MCF 10A (cell line): ENCODE measurements at regions of chr15 and their contacts with region 1.

Region 1: DNA sequence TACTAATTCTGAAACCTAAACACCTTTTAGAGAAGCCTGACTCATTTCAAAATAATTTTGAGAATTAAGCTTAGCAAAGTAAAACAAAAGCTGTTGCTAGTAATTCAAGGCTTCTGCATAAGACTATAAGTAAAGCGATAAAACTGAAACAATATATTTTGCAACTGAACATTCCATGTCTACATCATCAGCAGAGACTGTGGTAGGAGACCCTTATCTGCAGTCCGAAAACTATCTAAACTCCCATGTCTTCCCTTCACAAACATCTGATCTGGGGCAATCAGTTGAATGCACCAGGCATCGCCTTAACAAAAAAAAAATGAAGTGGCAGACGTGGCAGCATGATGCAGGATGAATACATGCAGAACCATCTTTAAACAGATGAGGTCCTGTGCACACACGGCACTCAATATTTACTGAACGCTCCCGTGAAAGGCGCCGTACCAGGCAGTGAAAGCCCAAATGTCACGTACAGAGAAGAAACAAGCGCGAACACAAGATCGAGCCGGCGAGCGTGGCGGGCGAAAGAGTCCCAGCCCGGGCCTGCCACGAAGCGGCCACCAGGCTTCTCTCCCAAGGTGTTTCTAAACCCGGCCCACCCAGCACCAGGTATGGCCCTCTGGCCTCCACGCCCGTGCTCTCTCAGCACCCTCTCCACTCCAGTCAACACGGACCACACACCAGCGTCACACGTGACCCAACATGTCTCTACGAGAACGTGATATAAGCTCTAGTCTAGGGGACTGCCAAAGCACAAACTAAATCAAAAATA is 63.0 kb downstream of the CHSY1 start:
- DNase-seq: no peak
- H3K4me3 Mint-ChIP-seq: peak overlapping the region; percentile 72
- H3K27ac Mint-ChIP-seq: peak overlapping the region; percentile 73
- H3K4me1 Mint-ChIP-seq: peaks cover 18% of the 10 kb centered on the region
- H3K27me3 Mint-ChIP-seq: no peaks in the 10 kb centered on the region
- CTCF ChIP-seq: no peak

Region 2: GRCh38 chr15:101138913-101139880 is 49.6 kb before region 1 on chr15:
- CTCF ChIA-PET with region 1: no interaction called
- POLR2A ChIA-PET with region 1: interaction called, 4 read pairs
- intact Hi-C with region 1: loop called (anchors 5 kb)
- DNase-seq: no peak
- H3K4me3 Mint-ChIP-seq: no peak overlapping the region
- H3K27ac Mint-ChIP-seq: no peak overlapping the region
- H3K4me1 Mint-ChIP-seq: no peaks in the 10 kb centered on the region
- H3K27me3 Mint-ChIP-seq: no peaks in the 10 kb centered on the region
- CTCF ChIP-seq: no peak

Region 3: GRCh38 chr15:101204739-101205535 is 16.1 kb after region 1 on chr15:
- CTCF ChIA-PET with region 1: no interaction called
- POLR2A ChIA-PET with region 1: no interaction called
- intact Hi-C with region 1: no loop called
- DNase-seq: no peak
- H3K4me3 Mint-ChIP-seq: no peak overlapping the region
- H3K27ac Mint-ChIP-seq: no peak overlapping the region
- H3K4me1 Mint-ChIP-seq: peaks cover 41% of the 10 kb centered on the region
- H3K27me3 Mint-ChIP-seq: no peaks in the 10 kb centered on the region
- CTCF ChIP-seq: no peak